GM23248 (cell line): ENCODE measurements at regions of chr11 and their contacts with region 1.

Region 1: GRCh38 chr11:5204787-5205186 is 4.3 kb upstream of the OR51V1 start:
- DNase-seq: peak; percentile 80
- H3K4me3 ChIP-seq: no peak overlapping the region
- H3K27ac ChIP-seq: no peak overlapping the region
- H3K4me1 ChIP-seq: peaks cover 14% of the 10 kb centered on the region
- H3K27me3 ChIP-seq: no peaks in the 10 kb centered on the region

Region 2: GRCh38 chr11:5369793-5370192 is 165.0 kb after region 1 on chr11:
- in situ Hi-C with region 1: loop called (anchors 5 kb)
- DNase-seq: peak; percentile 68
- H3K4me3 ChIP-seq: no peak overlapping the region
- H3K27ac ChIP-seq: no peak overlapping the region
- H3K4me1 ChIP-seq: peaks cover 48% of the 10 kb centered on the region
- H3K27me3 ChIP-seq: no peaks in the 10 kb centered on the region